T-cell (primary cell): ENCODE measurements at regions of chr17 and their contacts with region 1.

Region 1: GRCh38 chr17:42413464-42414040 is 9.5 kb downstream of the CAVIN1 start:
- DNase-seq: no peak
- ATAC-seq: no peak
- H3K4me3 ChIP-seq: no peak overlapping the region
- H3K4me3 Mint-ChIP-seq: no peak overlapping the region
- H3K27ac ChIP-seq: no peak overlapping the region
- H3K27ac Mint-ChIP-seq: no peak overlapping the region
- H3K4me1 ChIP-seq: peaks cover 8 to 18% of the 10 kb centered on the region in 2 experiments
- H3K4me1 Mint-ChIP-seq: peaks cover 17 to 24% (median 19%) of the 10 kb centered on the region in 3 donors
- H3K27me3 ChIP-seq: peaks cover 0 to 4% of the 10 kb centered on the region in 2 experiments
- H3K27me3 Mint-ChIP-seq: no peaks in the 10 kb centered on the region

Region 2: DNA sequence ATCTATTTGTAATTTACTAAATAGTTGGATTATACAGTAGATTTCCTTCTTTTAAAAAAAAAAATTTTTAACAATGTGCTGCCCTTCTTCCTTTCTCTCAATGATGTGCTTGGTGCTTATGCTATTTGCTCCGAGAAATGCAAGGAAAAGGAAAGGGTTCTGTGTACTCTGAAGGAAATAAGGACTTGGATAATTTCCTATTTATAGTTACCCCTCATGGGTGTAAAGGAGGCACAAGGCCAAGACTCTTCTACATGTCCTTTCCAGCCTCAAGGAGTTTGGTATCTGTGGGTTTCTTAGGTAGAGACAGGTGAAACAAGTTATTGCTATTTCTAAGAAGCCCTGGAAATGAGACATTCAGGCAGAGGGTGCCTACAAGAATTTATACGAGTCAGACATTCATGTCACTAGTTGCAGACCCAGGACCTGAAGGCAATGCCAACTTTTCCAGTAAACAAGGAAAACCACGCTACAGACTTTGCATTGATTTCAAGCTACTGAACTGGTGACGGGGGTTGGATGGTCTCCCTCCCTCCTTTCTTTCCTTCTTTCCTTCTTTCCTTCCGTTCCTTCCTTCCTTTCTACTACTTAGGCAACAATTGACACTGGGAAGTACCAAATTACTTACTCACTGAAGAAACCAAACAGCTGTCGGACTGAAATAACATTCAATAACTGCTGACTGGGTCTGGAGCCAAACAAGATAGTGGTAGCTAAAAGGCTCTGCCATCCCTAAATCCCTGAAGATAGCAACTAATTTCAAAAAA is 185.5 kb before region 1 on chr17:
- CTCF ChIA-PET with region 1: no interaction called
- POLR2A ChIA-PET with region 1: no interaction called
- DNase-seq: no peak
- ATAC-seq: no peak
- H3K4me3 ChIP-seq: no peak overlapping the region
- H3K4me3 Mint-ChIP-seq: no peak overlapping the region
- H3K27ac ChIP-seq: no peak overlapping the region
- H3K27ac Mint-ChIP-seq: peak overlapping the region in 1 of 2 donors; percentile 4
- H3K4me1 ChIP-seq: peaks cover 0 to 4% of the 10 kb centered on the region in 2 experiments
- H3K4me1 Mint-ChIP-seq: peaks cover 12 to 24% (median 23%) of the 10 kb centered on the region in 3 donors
- H3K27me3 ChIP-seq: no peaks in the 10 kb centered on the region
- H3K27me3 Mint-ChIP-seq: no peaks in the 10 kb centered on the region

Region 3: GRCh38 chr17:42354956-42355843 is 58.4 kb before region 1 on chr17:
- CTCF ChIA-PET with region 1: no interaction called
- POLR2A ChIA-PET with region 1: no interaction called
- DNase-seq: no peak
- ATAC-seq: no peak
- H3K4me3 ChIP-seq: no peak overlapping the region
- H3K4me3 Mint-ChIP-seq: no peak overlapping the region
- H3K27ac ChIP-seq: no peak overlapping the region
- H3K27ac Mint-ChIP-seq: peak overlapping the region; percentile 16 to 65
- H3K4me1 ChIP-seq: peaks cover 0 to 9% of the 10 kb centered on the region in 2 experiments
- H3K4me1 Mint-ChIP-seq: peaks cover 40 to 55% (median 46%) of the 10 kb centered on the region in 3 donors
- H3K27me3 ChIP-seq: no peaks in the 10 kb centered on the region
- H3K27me3 Mint-ChIP-seq: no peaks in the 10 kb centered on the region

Region 4: DNA sequence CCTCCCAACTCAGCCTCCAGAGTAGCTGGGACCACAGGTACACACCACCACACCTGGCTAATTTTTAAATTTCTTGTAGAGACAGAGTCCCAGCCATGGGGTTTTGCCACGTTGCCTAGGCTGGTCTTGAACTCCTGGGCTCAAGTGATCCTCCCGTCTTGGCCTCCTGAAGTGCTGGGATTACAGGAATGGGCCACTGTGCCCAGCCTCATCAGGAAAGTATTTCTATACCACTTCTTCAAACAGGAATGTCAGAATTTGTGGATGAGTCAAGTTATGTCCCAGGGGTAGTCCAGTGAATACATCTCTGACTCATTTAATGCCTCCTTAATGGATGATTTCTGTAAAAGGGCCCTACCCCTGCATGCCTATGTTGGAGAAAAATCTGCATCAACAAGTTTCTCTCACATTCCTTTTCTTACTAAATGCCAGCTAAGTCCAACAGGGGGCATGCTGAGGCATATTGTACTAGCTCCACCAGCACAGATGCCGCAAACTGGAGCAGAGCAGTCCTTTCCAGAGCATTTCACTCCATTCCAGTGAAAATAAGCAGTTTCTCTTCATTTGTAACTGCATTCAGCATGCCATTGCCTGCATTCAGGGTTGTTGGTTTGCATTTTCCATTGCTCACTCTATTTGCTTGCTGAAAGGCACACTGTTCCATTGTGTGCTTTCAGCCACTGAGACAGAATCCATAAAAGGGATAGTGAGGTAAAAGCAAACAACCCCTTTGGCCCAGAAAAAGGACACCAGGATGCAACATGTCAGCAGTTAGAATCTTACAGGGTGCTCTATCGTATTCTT is 14.8 kb after region 1 on chr17:
- CTCF ChIA-PET with region 1: interaction called, 3 to 10 read pairs
- POLR2A ChIA-PET with region 1: no interaction called
- DNase-seq: peak in 23 of 35 experiments; percentile 17 to 73 (median 38)
- ATAC-seq: peak; percentile 54 to 78 (median 66)
- H3K4me3 ChIP-seq: no peak overlapping the region
- H3K4me3 Mint-ChIP-seq: no peak overlapping the region
- H3K27ac ChIP-seq: no peak overlapping the region
- H3K27ac Mint-ChIP-seq: peak overlapping the region in 1 of 2 donors; percentile 49
- H3K4me1 ChIP-seq: peaks cover 2 to 5% of the 10 kb centered on the region in 2 experiments
- H3K4me1 Mint-ChIP-seq: peaks cover 0 to 5% (median 5%) of the 10 kb centered on the region in 3 donors
- H3K27me3 ChIP-seq: peaks cover 0 to 48% of the 10 kb centered on the region in 2 experiments
- H3K27me3 Mint-ChIP-seq: peaks cover under 1 to 30% of the 10 kb centered on the region in 2 donors